H1 (cell line): ENCODE measurements at regions of chr10 and their contacts with region 1.

Region 1: GRCh38 chr10:125343118-125343925 is 183.0 kb upstream of the CTBP2 start:
- DNase-seq: peak in 1 of 2 experiments; percentile 55
- H3K4me3 ChIP-seq: no peak overlapping the region
- H3K27ac ChIP-seq: no peak overlapping the region
- H3K4me1 ChIP-seq: peaks cover 0 to 3% (median 0%) of the 10 kb centered on the region in 4 experiments; a peak in 1 of 7 replicates
- H3K27me3 ChIP-seq: no peaks in the 10 kb centered on the region
- CTCF ChIP-seq: peak in 2 of 3 experiments; percentile 60 to 73; a peak in 3 of 4 replicates
- EP300 ChIP-seq: no peak
- POLR2A ChIP-seq: no peak
- RAD21 ChIP-seq: peak; percentile 65 to 70

Region 2: GRCh38 chr10:125333209-125333591 is 10.1 kb before region 1 on chr10:
- CTCF ChIA-PET with region 1: interaction called, 15 read pairs
- POLR2A ChIA-PET with region 1: no interaction called
- DNase-seq: no peak
- H3K4me3 ChIP-seq: no peak overlapping the region
- H3K27ac ChIP-seq: no peak overlapping the region
- H3K4me1 ChIP-seq: peaks cover 0 to 3% (median 0%) of the 10 kb centered on the region in 4 experiments; a peak in 1 of 7 replicates
- H3K27me3 ChIP-seq: no peaks in the 10 kb centered on the region
- CTCF ChIP-seq: no peak
- EP300 ChIP-seq: no peak
- POLR2A ChIP-seq: no peak
- RAD21 ChIP-seq: no peak

Region 3: DNA sequence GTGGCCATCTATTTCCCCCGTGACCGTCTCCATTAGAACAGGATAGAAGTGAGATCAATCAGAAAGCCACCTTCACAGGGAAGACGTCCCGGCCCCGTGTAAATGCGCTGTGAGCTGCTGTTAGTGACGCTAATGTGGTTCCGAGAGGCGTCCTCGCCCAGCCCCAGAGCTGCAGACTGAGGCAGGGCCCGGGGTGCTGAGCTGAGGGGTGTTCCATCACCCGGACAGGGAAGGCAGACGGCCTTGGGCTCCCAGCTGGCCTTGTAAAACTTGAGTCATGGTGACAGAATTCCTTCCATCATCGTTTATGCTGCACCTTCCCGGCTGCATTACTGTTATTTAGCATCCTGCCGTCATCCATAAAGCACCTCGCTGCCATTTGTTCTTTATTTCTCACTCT is 12.3 kb after region 1 on chr10:
- CTCF ChIA-PET with region 1: interaction called, 27 read pairs
- POLR2A ChIA-PET with region 1: no interaction called
- DNase-seq: no peak
- H3K4me3 ChIP-seq: no peak overlapping the region
- H3K27ac ChIP-seq: no peak overlapping the region
- H3K4me1 ChIP-seq: no peaks in the 10 kb centered on the region
- H3K27me3 ChIP-seq: no peaks in the 10 kb centered on the region
- CTCF ChIP-seq: no peak
- EP300 ChIP-seq: no peak
- POLR2A ChIP-seq: no peak
- RAD21 ChIP-seq: no peak